Left ventricle myocardium superior (tissue), 1 donor: ENCODE measurements at regions of chr3 and their contacts with region 1.

Region 1: GRCh38 chr3:111859974-111860859 is 1.2 kb downstream of the PHLDB2 start:
- DNase-seq: peak; percentile 80
- ATAC-seq: peak; percentile 77

Region 2: DNA sequence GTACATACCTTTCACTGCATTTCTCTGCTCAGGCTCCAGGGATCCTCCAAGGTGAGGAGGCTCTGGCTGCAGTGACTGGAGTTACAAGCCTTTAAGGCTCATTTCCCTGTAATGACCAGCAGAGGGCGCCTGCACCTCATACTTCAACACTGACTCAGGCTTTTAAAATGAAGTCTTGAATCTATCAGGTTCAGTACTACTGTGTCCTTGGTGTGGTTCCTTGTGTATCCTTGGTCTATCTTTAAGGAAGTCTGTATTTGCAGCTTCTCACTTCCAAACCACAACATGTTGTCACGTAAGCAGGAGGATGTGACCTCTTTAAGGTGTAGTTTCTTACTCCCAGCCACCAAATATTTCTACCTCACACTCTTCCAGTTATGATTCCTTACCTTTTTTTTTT is 142.6 kb before region 1 on chr3:
- intact Hi-C with region 1: loop called (anchors 2 kb)
- DNase-seq: peak; percentile 75
- ATAC-seq: peak; percentile 89

Region 3: DNA sequence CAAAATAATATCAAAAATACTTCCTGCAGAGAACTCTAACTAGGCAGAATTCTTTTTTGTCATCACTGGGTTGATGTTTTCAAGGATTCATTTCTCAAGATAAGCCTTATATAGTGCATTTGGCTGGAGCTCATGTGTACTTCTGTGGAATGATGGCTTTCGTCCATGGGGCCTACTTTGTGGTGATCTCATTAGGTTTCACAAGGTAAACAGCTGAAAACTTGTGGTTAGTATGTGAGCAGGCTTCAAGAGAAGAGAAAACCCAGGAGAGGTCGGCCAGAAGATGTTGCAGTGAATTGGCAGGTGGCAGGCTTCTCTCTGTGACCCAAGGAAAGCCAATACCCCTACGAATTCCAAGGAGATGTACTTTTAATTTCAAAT is 122.5 kb before region 1 on chr3:
- intact Hi-C with region 1: loop called (anchors 5 kb)
- DNase-seq: peak; percentile 33
- ATAC-seq: peak; percentile 80

Region 4: GRCh38 chr3:111803123-111803593 is 57.1 kb before region 1 on chr3:
- intact Hi-C with region 1: loop called (anchors 10 kb)
- DNase-seq: peak; percentile 49
- ATAC-seq: peak; percentile 82

Region 5: DNA sequence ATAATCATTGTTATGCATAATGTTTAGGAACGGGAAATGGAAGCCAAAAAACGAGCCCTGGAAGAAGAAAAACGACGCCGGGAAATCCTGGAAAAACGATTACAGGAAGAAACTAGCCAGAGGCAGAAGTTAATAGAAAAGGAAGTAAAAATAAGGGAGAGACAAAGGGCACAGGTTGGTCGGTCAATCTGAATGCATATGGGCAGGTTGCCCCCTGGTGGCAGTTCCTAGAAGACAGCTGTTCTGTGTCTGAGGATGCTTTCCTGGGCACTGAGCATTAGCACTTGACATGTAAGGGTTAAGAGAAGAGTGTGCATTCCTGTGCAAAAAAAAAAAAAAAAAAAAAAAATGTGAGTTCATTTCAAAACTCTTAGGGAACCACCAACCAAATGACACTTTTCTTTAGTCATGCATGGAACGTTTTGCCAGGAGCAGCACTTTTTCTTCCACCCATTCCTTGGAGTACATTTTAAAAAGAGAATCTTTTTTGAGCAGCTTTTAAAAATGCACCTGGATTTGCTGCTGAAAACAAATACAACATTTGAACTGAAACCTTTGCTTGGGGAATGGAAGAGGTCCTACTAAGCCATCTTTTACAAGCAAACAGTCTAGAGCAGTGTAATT is 107.5 kb after region 1 on chr3:
- intact Hi-C with region 1: loop called (anchors 2 kb)
- DNase-seq: peak; percentile 80
- ATAC-seq: peak; percentile 78